Activated B cell treated with CpG ODN at 0.5 μM for 24 hours (primary cell): ENCODE measurements at regions of chr10 and their contacts with region 1.

Region 1: GRCh38 chr10:79068562-79069324 is at the start of gene ZMIZ1:
- DNase-seq: peak; percentile 78
- ATAC-seq: peak; percentile 66
- H3K4me3 Mint-ChIP-seq: peak within 1 kb of the TSS; percentile 89
- H3K27ac Mint-ChIP-seq: peak within 1 kb of the TSS; percentile 75
- H3K4me1 Mint-ChIP-seq: peaks cover 30% of the 10 kb centered on the region
- H3K27me3 Mint-ChIP-seq: peaks cover 21% of the 10 kb centered on the region
- CTCF ChIP-seq: no peak
- total RNA-seq, gene ZMIZ1: 88.2 and 93.9 TPM in 2 replicates

Region 2: GRCh38 chr10:78302989-78303854 is 765.5 kb before region 1 on chr10:
- CTCF ChIA-PET with region 1: no interaction called
- POLR2A ChIA-PET with region 1: interaction called, 3 read pairs
- intact Hi-C with region 1: loop called (anchors 1 kb)
- DNase-seq: peak; percentile 96
- ATAC-seq: peak; percentile 87
- H3K4me3 Mint-ChIP-seq: peak overlapping the region; percentile 92
- H3K27ac Mint-ChIP-seq: peak overlapping the region; percentile 93
- H3K4me1 Mint-ChIP-seq: peaks cover 47% of the 10 kb centered on the region
- H3K27me3 Mint-ChIP-seq: no peaks in the 10 kb centered on the region
- CTCF ChIP-seq: peak; percentile 44

Region 3: DNA sequence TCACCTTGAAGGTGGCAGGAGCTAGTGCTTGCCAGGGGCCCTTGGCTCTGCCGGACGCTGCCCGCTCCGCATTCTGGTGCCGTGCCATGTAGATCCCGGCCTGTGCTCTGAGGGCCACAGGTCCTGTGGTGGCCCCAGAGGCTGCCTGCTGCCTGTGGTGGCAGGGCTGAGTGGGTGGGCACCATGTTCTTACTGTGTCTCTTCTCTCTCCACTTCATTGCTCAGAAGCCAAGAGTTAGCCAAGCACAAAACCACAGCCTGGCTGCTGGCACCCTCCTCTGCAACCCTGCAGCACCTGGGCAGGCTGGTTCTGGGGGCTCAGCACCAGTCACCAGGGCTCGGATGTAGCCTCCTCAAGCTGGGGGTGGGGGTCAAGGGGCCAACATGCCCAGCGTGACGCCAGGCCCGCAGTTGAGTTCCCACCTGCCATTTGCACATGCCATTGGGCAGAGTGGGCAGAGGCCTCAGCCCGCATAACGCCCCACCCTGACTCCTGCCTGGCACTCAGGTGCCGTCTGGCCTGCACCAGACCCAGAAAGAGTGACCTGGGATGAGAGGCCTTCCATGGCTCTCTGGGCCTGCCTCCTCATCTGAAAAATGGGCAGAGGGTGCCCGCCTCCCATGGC is 16.3 kb after region 1 on chr10:
- CTCF ChIA-PET with region 1: no interaction called
- POLR2A ChIA-PET with region 1: no interaction called
- intact Hi-C with region 1: loop called (anchors 1 kb)
- DNase-seq: no peak
- ATAC-seq: peak; percentile 87
- H3K4me3 Mint-ChIP-seq: peak overlapping the region; percentile 67
- H3K27ac Mint-ChIP-seq: no peak overlapping the region
- H3K4me1 Mint-ChIP-seq: peaks cover 45% of the 10 kb centered on the region
- H3K27me3 Mint-ChIP-seq: peaks cover 33% of the 10 kb centered on the region
- CTCF ChIP-seq: no peak

Region 4: DNA sequence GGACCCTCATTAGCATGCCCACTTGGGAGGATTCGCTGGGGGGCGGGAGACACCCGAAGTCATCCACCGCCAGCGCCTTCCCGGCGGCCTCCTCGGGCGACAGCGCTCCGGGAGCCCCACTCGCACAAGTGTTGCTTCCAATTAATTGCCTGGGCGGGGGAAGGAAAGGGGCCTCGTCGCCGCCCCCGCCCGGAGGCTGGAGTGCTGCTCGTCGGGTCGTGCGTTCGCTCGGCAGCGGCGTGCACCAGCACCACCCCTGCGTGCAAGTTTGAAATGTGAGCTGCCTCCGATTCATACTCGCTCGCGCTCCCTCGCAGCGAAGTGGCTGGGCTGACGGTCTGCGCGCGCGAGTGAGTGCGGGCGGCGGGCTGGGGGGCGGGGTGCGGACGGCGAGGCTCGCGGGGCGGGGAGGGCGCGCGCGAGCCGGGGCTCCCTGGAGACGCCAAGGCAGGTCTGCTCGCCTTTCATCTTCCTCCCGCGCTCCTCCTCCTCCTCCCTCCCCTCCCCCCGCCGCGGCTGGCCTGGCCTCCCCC is 173.9 kb after region 1 on chr10:
- CTCF ChIA-PET with region 1: no interaction called
- POLR2A ChIA-PET with region 1: interaction called, 3 read pairs
- intact Hi-C with region 1: loop called (anchors 1 kb)
- DNase-seq: peak; percentile 71
- ATAC-seq: peak; percentile 52
- H3K4me3 Mint-ChIP-seq: peak overlapping the region; percentile 84
- H3K27ac Mint-ChIP-seq: peak overlapping the region; percentile 50
- H3K4me1 Mint-ChIP-seq: peaks cover 57% of the 10 kb centered on the region
- H3K27me3 Mint-ChIP-seq: no peaks in the 10 kb centered on the region
- CTCF ChIP-seq: no peak

Region 5: DNA sequence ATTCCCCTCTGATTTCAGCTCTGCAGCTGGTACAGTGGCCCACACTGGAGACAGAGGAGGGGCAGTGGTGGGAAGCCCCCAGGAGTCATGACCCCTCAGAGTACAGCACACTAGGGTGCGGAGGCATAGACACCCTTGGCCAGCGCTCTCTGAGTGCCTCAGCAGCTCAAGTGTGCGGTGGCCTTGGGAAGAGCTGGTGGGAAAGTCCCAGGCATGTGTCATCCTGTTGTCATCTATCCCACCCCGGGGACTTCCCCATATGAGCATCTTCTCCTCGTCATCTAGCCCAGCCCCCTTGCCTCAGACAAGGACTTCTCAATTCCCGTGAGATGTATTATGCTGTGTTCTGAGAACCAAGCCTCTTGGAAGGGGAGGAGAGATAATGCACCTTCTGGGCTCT is 263.0 kb after region 1 on chr10:
- CTCF ChIA-PET with region 1: no interaction called
- POLR2A ChIA-PET with region 1: no interaction called
- intact Hi-C with region 1: loop called (anchors 5 kb)
- DNase-seq: peak; percentile 57
- ATAC-seq: peak; percentile 93
- H3K4me3 Mint-ChIP-seq: peak overlapping the region; percentile 41
- H3K27ac Mint-ChIP-seq: peak overlapping the region; percentile 79
- H3K4me1 Mint-ChIP-seq: peaks cover 24% of the 10 kb centered on the region
- H3K27me3 Mint-ChIP-seq: no peaks in the 10 kb centered on the region
- CTCF ChIP-seq: no peak

Region 6: DNA sequence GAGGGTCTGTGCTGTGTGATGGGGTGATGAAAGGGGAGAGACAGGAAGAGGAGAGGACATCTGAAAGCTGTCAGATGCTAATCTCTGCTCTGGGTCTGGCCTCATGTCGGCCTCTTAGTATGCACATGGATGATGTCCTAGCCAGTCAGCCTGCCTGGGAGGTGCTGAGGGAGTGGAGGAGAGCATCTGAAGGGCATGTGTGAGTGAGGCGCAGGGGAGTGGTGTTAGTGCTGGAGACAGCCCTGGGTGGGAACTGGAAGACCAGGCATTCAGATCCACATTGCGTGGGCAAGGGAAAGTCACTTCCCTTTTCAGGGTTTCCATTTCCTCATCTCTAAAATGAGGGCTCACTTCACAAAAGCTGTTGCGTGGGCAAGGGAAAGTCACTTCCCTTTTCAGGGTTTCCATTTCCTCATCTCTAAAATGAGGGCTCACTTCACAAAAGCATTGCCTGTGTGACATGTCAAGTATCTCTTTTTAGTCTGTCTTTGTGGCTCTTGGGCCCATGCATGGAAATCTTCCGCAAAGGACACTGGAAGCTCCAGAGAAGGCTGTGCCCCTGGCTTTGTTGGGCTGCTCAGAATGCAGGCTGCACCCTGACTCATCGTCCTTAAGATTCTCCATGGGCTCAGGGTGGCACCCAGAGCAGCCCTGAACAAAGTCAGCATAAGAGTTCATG is 870.1 kb after region 1 on chr10:
- CTCF ChIA-PET with region 1: no interaction called
- POLR2A ChIA-PET with region 1: no interaction called
- intact Hi-C with region 1: loop called (anchors 2 kb)
- DNase-seq: peak; percentile 69
- ATAC-seq: peak; percentile 85
- H3K4me3 Mint-ChIP-seq: peak overlapping the region; percentile 64
- H3K27ac Mint-ChIP-seq: peak overlapping the region; percentile 97
- H3K4me1 Mint-ChIP-seq: peaks cover 48% of the 10 kb centered on the region
- H3K27me3 Mint-ChIP-seq: no peaks in the 10 kb centered on the region
- CTCF ChIP-seq: no peak